ENCODE measurements at regions of chr1 and their contacts with region 1.

Region 1: GRCh38 chr1:32291708-32292492 is at the start of gene HDAC1:
- DNase-seq: peak; percentile 94 to 98 (median 97)
- ATAC-seq: peak; percentile 93
- H3K4me3 ChIP-seq: peak within 1 kb of the TSS; percentile 84 to 92
- H3K4me3 Mint-ChIP-seq: peak within 1 kb of the TSS; percentile 100
- H3K27ac ChIP-seq: peak within 1 kb of the TSS; percentile 68 to 69
- H3K27ac Mint-ChIP-seq: peak within 1 kb of the TSS; percentile 98
- H3K4me1 ChIP-seq: peaks cover 45% of the 10 kb centered on the region
- H3K4me1 Mint-ChIP-seq: peaks cover 52% of the 10 kb centered on the region
- H3K27me3 ChIP-seq: no peaks in the 10 kb centered on the region
- H3K27me3 Mint-ChIP-seq: no peaks in the 10 kb centered on the region
- CTCF ChIP-seq: no peak
- total RNA-seq, gene HDAC1: 57.8 to 61.4 TPM

Region 2: GRCh38 chr1:32179443-32180185 is 112.3 kb before region 1 on chr1 and contains the start of gene TXLNA:
- CTCF ChIA-PET with region 1: no interaction called
- POLR2A ChIA-PET with region 1: interaction called, 4 read pairs
- intact Hi-C with region 1: loop called in 1 of 2 experiments (anchors 1 kb)
- DNase-seq: peak; percentile 66 to 93 (median 88)
- ATAC-seq: peak; percentile 88
- H3K4me3 ChIP-seq: peak within 1 kb of the TSS; percentile 67 to 85
- H3K4me3 Mint-ChIP-seq: peak within 1 kb of the TSS; percentile 84
- H3K27ac ChIP-seq: peak within 1 kb of the TSS; percentile 70 to 89
- H3K27ac Mint-ChIP-seq: peak within 1 kb of the TSS; percentile 93
- H3K4me1 ChIP-seq: peaks cover 26% of the 10 kb centered on the region
- H3K4me1 Mint-ChIP-seq: peaks cover 44% of the 10 kb centered on the region
- H3K27me3 ChIP-seq: no peaks in the 10 kb centered on the region
- H3K27me3 Mint-ChIP-seq: no peaks in the 10 kb centered on the region
- CTCF ChIP-seq: no peak
- total RNA-seq, gene TXLNA: 7.5 to 8.9 TPM

Region 3: GRCh38 chr1:32247983-32248889 is 43.7 kb before region 1 on chr1:
- CTCF ChIA-PET with region 1: interaction called, 8 read pairs
- POLR2A ChIA-PET with region 1: interaction called, 115 read pairs
- intact Hi-C with region 1: loop called (anchors 2 kb)
- DNase-seq: peak; percentile 51 to 84 (median 76)
- ATAC-seq: peak; percentile 5
- H3K4me3 ChIP-seq: peak overlapping the region; percentile 21 to 28
- H3K4me3 Mint-ChIP-seq: peak overlapping the region; percentile 66
- H3K27ac ChIP-seq: peak overlapping the region; percentile 40 to 93
- H3K27ac Mint-ChIP-seq: peak overlapping the region; percentile 99
- H3K4me1 ChIP-seq: peaks cover 42% of the 10 kb centered on the region
- H3K4me1 Mint-ChIP-seq: peaks cover 44% of the 10 kb centered on the region
- H3K27me3 ChIP-seq: no peaks in the 10 kb centered on the region
- H3K27me3 Mint-ChIP-seq: no peaks in the 10 kb centered on the region
- CTCF ChIP-seq: peak; percentile 86

Region 4: DNA sequence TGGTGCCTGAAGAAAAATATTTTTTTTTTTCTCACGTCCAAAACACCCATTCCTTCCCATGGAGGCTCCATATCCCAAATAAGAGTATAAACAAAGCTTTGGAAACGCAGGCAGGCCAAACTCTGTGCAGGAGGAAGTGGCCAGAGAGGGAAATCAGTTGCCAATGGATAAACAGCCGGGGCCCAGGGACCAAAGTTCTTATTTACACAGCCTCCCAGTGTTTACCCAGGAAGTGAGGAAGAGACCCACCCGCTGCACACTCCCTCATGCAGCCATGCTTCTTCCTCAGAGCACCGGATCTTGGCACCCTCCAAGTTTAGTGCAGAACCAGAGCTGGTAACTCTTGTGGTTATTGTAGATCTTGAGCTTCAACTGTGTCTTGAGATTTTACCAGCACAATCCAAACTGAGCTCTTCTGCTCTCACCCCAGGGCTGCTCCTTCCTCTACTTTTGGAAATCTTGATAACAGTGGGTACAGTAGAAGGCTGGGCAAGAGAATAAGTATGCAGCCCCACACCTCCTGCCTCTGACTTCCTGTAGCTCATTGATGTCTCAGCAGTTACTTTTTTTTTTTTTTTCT is 29.9 kb after region 1 on chr1:
- CTCF ChIA-PET with region 1: interaction called, 5 read pairs
- POLR2A ChIA-PET with region 1: interaction called, 14 read pairs
- intact Hi-C with region 1: no loop called
- DNase-seq: peak in 7 of 9 experiments; percentile 11 to 72 (median 43)
- ATAC-seq: peak; percentile 87
- H3K4me3 ChIP-seq: peak overlapping the region in 1 of 2 experiments; percentile 6
- H3K4me3 Mint-ChIP-seq: peak overlapping the region; percentile 56
- H3K27ac ChIP-seq: peak overlapping the region; percentile 29 to 41
- H3K27ac Mint-ChIP-seq: peak overlapping the region; percentile 81
- H3K4me1 ChIP-seq: peaks cover 38% of the 10 kb centered on the region
- H3K4me1 Mint-ChIP-seq: peaks cover 38% of the 10 kb centered on the region
- H3K27me3 ChIP-seq: no peaks in the 10 kb centered on the region
- H3K27me3 Mint-ChIP-seq: no peaks in the 10 kb centered on the region
- CTCF ChIP-seq: no peak

Region 5: GRCh38 chr1:32394141-32394889 is 102.4 kb after region 1 on chr1 and contains the start of gene BSDC1:
- CTCF ChIA-PET with region 1: no interaction called
- POLR2A ChIA-PET with region 1: interaction called, 13 read pairs
- intact Hi-C with region 1: loop called (anchors 1 kb)
- DNase-seq: peak; percentile 97 to 99 (median 98)
- ATAC-seq: peak; percentile 98
- H3K4me3 ChIP-seq: peak within 1 kb of the TSS; percentile 75 to 92
- H3K4me3 Mint-ChIP-seq: peak within 1 kb of the TSS; percentile 99
- H3K27ac ChIP-seq: peak within 1 kb of the TSS; percentile 86 to 98
- H3K27ac Mint-ChIP-seq: peak within 1 kb of the TSS; percentile 100
- H3K4me1 ChIP-seq: peaks cover 11% of the 10 kb centered on the region
- H3K4me1 Mint-ChIP-seq: peaks cover 31% of the 10 kb centered on the region
- H3K27me3 ChIP-seq: no peaks in the 10 kb centered on the region
- H3K27me3 Mint-ChIP-seq: no peaks in the 10 kb centered on the region
- CTCF ChIP-seq: no peak
- total RNA-seq, gene BSDC1: 189 to 201 TPM

Measured in CD8-positive, alpha-beta T cell (primary cell).